T-cell (primary cell): ENCODE measurements at regions of chr3 and their contacts with region 1.

Region 1: GRCh38 chr3:183641882-183642281 is 6.5 kb downstream of the KLHL24 start:
- DNase-seq: no peak
- ATAC-seq: no peak
- H3K4me3 ChIP-seq: no peak overlapping the region
- H3K4me3 Mint-ChIP-seq: no peak overlapping the region
- H3K27ac ChIP-seq: no peak overlapping the region
- H3K27ac Mint-ChIP-seq: no peak overlapping the region
- H3K4me1 ChIP-seq: peaks cover 6 to 19% of the 10 kb centered on the region in 2 experiments
- H3K4me1 Mint-ChIP-seq: peaks cover 49 to 58% (median 53%) of the 10 kb centered on the region in 3 donors
- H3K27me3 ChIP-seq: no peaks in the 10 kb centered on the region
- H3K27me3 Mint-ChIP-seq: no peaks in the 10 kb centered on the region

Region 2: GRCh38 chr3:182824957-182825356 is 816.9 kb before region 1 on chr3:
- CTCF ChIA-PET with region 1: no interaction called
- POLR2A ChIA-PET with region 1: interaction called in 1 of 2 experiments, 11 read pairs
- DNase-seq: no peak
- ATAC-seq: no peak
- H3K4me3 ChIP-seq: no peak overlapping the region
- H3K4me3 Mint-ChIP-seq: no peak overlapping the region
- H3K27ac ChIP-seq: no peak overlapping the region
- H3K27ac Mint-ChIP-seq: peak overlapping the region in 1 of 2 donors; percentile 64
- H3K4me1 ChIP-seq: no peaks in the 10 kb centered on the region
- H3K4me1 Mint-ChIP-seq: peaks cover 30 to 51% (median 47%) of the 10 kb centered on the region in 3 donors
- H3K27me3 ChIP-seq: no peaks in the 10 kb centered on the region
- H3K27me3 Mint-ChIP-seq: no peaks in the 10 kb centered on the region

Region 3: DNA sequence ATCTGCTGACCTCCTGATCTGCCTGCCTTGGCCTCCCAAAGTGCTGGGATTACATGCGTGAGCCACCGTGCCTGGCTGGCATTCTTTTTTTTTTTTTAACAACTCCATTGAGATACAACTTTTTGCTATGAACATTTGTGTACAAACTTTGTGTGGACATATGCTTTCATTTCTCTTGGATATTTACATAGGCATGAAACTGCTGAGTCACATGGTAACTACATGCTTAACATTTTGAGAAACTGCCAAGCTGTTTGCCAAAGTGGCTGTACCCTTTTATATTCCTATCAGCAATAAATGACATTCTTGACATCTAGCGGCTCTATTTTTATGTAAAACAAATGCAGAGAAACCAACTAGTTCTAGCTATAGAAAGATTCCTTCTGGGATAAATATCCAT is 47.0 kb after region 1 on chr3:
- CTCF ChIA-PET with region 1: interaction called in 1 of 2 experiments, 11 read pairs
- POLR2A ChIA-PET with region 1: no interaction called
- DNase-seq: no peak
- ATAC-seq: no peak
- H3K4me3 ChIP-seq: no peak overlapping the region
- H3K4me3 Mint-ChIP-seq: no peak overlapping the region
- H3K27ac ChIP-seq: no peak overlapping the region
- H3K27ac Mint-ChIP-seq: no peak overlapping the region
- H3K4me1 ChIP-seq: no peaks in the 10 kb centered on the region
- H3K4me1 Mint-ChIP-seq: no peaks in the 10 kb centered on the region
- H3K27me3 ChIP-seq: peaks cover 0 to 5% of the 10 kb centered on the region in 2 experiments
- H3K27me3 Mint-ChIP-seq: no peaks in the 10 kb centered on the region